Natural killer cell (primary cell): ENCODE measurements at regions of chr7 and their contacts with region 1.

Region 1: GRCh38 chr7:138954545-138955475 is 26.4 kb downstream of the KIAA1549 start:
- DNase-seq: no peak
- ATAC-seq: no peak
- H3K4me3 ChIP-seq: no peak overlapping the region
- H3K4me3 Mint-ChIP-seq: no peak overlapping the region
- H3K27ac ChIP-seq: no peak overlapping the region
- H3K27ac Mint-ChIP-seq: no peak overlapping the region
- H3K4me1 ChIP-seq: no peaks in the 10 kb centered on the region
- H3K4me1 Mint-ChIP-seq: no peaks in the 10 kb centered on the region
- H3K27me3 ChIP-seq: no peaks in the 10 kb centered on the region
- H3K27me3 Mint-ChIP-seq: peaks cover 12 to 14% of the 10 kb centered on the region in 2 donors
- CTCF ChIP-seq: no peak

Region 2: DNA sequence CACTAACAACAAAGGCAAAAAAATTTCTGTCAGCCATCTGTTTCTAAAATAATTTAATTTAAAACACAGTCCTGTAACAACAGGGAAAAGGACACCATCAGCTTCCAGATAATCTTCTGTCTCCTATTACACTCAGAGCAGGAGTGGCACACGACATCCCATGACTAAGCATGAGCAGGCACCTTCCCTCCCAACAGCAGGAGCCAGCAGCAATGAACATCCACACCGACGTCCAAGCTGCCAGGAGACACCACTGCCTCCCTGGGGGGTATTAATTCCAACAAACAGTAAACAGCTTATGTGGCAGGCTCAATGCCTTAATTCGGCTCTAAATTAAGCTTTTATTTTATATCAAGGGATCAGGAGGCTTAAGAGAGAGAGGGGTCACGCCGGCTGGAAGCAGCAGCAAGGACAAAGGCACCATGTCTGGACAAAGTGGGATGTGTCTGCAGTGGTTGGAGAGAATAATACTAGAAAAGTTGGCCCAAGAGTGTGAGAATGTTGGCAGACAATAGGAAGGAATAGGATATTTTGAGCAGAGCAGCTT is 19.3 kb before region 1 on chr7:
- intact Hi-C with region 1: loop called (anchors 2 kb)
- DNase-seq: no peak
- ATAC-seq: no peak
- H3K4me3 ChIP-seq: no peak overlapping the region
- H3K4me3 Mint-ChIP-seq: no peak overlapping the region
- H3K27ac ChIP-seq: no peak overlapping the region
- H3K27ac Mint-ChIP-seq: no peak overlapping the region
- H3K4me1 ChIP-seq: no peaks in the 10 kb centered on the region
- H3K4me1 Mint-ChIP-seq: no peaks in the 10 kb centered on the region
- H3K27me3 ChIP-seq: no peaks in the 10 kb centered on the region
- H3K27me3 Mint-ChIP-seq: peaks cover 9 to 16% of the 10 kb centered on the region in 2 donors
- CTCF ChIP-seq: no peak